ENCODE measurements at regions of chr4 and their contacts with region 1.

Region 1: DNA sequence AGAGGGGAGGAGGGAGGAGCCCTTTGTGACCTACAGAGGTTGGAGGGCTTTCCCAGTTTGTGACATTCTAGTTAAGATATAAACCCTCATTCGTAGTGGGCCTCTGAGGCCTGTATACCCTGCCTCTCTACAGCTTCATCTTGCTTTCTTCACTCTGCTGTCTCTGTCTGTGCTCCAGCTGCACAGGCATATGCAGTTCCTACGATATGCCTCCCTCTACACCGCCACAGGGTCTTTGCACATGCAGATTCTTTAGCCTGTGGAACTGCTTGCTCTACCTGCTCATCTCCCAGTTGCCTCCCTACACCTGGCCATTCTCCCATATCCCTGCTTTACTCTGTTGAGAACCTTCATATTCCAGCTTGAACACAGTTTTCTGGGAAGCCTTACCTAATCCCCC is 38.1 kb downstream of the SLIT2 start:
- DNase-seq: no peak
- H3K4me3 ChIP-seq: no peak overlapping the region
- CTCF ChIP-seq: no peak
- POLR2A ChIP-seq: no peak

Region 2: GRCh38 chr4:19033816-19034733 is 1255.7 kb before region 1 on chr4:
- intact Hi-C with region 1: no loop called
- DNase-seq: no peak
- H3K4me3 ChIP-seq: no peak overlapping the region
- CTCF ChIP-seq: no peak
- POLR2A ChIP-seq: no peak

Region 3: DNA sequence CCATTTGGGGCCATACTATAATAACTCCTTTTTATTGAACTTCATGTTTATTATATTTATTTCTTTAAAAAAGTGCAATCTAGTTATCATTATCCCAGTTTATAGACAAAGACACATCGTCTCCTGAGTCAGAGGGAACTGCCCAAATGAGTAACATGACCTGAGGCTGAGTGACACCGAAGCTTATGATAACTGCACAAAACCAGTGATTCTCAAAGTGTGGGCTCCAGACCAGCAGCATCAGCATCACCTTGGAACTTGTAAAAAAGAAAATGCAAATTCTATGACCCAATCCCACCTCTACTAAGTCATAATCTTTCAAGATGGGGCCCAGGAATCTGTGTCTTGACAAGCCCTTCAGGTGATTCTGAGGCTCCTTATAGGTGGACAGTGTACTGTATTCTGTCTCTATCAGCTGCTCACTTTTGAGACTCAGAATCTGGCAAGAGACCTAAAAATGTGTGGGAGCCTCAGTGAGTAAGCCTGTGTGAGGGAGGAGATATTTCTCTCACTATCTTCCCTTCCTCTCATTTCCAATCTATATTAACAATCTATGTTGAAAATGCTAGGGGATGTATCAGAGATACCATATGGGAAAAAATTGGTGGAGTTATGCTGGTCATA is 557.5 kb after region 1 on chr4:
- intact Hi-C with region 1: loop called (anchors 5 kb)
- DNase-seq: no peak
- H3K4me3 ChIP-seq: no peak overlapping the region
- CTCF ChIP-seq: no peak
- POLR2A ChIP-seq: no peak